Spleen (tissue), 13 donors: ENCODE measurements at regions of chr1 and their contacts with region 1.

Region 1: DNA sequence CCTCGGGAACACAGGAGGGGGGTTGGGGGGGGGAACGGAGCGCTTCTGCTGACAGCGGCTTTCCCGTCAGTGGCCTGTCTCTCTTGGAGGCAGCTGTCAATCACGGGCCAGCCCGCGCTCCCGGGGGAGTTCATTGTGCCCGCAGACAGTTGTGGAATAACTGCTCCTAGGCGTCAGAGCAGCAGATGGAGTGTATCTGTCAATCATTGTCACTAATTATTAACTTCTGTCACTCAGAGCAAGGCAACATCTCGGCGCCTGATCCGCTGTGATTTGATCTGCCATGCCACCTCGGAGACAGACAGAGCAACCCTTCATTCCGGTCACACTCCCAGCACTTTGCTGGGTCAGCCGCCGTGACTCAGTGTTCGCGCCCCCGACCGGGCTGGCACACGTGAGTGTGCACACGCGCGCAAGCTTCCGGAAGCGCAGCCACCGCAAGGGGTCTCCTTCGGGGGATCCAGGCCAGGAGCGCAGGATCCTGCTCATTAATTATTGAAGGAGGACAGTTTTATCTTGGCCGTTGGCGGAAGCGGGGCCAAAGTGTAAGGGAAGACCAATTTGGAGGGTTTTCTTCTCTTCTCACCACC is 75.8 kb downstream of the RRAGC start:
- DNase-seq: no peak
- H3K4me3 ChIP-seq: no peak overlapping the region
- H3K27ac ChIP-seq: no peak overlapping the region
- H3K4me1 ChIP-seq: peaks cover 0 to 8% (median 3%) of the 10 kb centered on the region in 6 donors
- H3K27me3 ChIP-seq: peaks cover 0 to 96% (median 17%) of the 10 kb centered on the region in 7 donors
- CTCF ChIP-seq: no peak
- POLR2A ChIP-seq: no peak

Region 2: GRCh38 chr1:38451541-38451993 is 332.2 kb before region 1 on chr1:
- intact Hi-C with region 1: no loop called
- DNase-seq: no peak
- H3K4me3 ChIP-seq: no peak overlapping the region
- H3K27ac ChIP-seq: no peak overlapping the region
- H3K4me1 ChIP-seq: peaks cover 9 to 22% (median 15%) of the 10 kb centered on the region in 6 donors
- H3K27me3 ChIP-seq: peaks cover 0 to 23% (median 0%) of the 10 kb centered on the region in 7 donors
- CTCF ChIP-seq: no peak
- POLR2A ChIP-seq: no peak

Region 3: GRCh38 chr1:38624336-38625039 is 159.2 kb before region 1 on chr1:
- intact Hi-C with region 1: loop called (anchors 10 kb)
- DNase-seq: no peak
- H3K4me3 ChIP-seq: no peak overlapping the region
- H3K27ac ChIP-seq: no peak overlapping the region
- H3K4me1 ChIP-seq: no peaks in the 10 kb centered on the region
- H3K27me3 ChIP-seq: peaks cover 0 to 13% (median 0%) of the 10 kb centered on the region in 7 donors
- CTCF ChIP-seq: no peak
- POLR2A ChIP-seq: no peak

Region 4: DNA sequence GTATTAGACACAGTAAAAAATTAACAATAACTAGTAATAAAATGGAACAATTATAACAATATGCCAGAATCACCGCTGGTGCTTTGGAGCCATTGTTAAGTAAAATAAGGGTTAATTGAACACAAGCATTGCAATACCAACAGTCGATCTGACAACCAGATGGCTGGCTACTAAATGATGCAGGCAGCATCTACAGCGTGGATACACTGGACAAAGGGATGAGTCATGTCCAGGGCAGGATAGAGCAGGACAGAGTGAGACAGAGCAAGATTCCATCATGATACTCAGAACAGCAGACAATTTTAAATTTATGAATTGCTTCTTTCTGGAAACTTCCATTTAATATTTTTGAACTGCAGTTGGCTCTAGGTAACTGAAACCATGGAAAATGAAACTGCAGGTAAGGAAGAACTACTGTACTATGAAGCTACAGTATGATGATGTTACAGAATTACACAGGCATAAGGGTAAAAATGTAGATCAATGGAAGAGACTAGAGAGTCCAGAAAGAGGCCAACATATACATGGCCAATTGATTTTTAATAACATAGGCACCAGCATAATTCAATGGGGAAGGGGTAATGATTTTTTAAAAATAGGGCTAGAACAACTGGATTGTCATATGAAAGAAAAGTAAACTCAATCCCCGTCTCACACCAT is 92.8 kb before region 1 on chr1:
- intact Hi-C with region 1: no loop called
- DNase-seq: no peak
- H3K4me3 ChIP-seq: no peak overlapping the region
- H3K27ac ChIP-seq: no peak overlapping the region
- H3K4me1 ChIP-seq: no peaks in the 10 kb centered on the region
- H3K27me3 ChIP-seq: peaks cover 0 to 48% (median 5%) of the 10 kb centered on the region in 7 donors
- CTCF ChIP-seq: no peak
- POLR2A ChIP-seq: no peak

Region 5: DNA sequence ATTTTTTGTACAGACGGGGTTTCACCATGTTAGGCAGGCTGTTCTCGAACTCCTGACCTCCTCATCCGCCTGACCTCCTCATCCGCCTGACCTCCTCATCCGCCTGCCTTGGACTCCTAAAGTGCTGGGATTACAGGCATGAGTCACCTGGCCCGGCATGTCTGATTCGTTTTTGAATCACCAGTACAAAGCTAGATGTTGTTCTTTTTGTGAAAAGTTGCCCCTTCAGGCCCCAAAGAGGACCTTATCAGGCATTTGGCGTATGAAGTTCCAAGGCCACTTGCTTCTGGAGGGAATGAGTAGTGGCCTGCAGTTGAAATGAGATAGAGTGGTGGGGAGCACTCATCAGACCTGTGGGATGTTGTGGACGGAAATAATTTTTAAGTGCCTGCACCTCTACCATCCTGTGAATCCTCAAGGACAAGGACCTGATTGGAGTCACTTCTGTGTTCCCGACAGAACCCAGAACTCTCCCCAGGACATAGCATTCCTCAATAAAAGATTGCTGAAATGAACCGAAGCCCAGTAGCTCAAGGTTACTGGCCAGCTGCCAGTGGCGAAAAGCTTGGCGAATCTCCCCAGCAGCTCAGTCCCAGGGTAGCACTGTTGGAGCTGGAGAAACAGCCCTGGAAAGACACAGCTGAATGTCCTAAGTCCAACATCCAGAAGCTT is 292.5 kb after region 1 on chr1:
- intact Hi-C with region 1: no loop called
- DNase-seq: peak; percentile 76
- H3K4me3 ChIP-seq: no peak overlapping the region
- H3K27ac ChIP-seq: peak overlapping the region in 7 of 8 donors; percentile 58 to 82 (median 72)
- H3K4me1 ChIP-seq: peaks cover 6 to 21% (median 14%) of the 10 kb centered on the region in 6 donors
- H3K27me3 ChIP-seq: peaks cover 0 to 18% (median 7%) of the 10 kb centered on the region in 7 donors
- CTCF ChIP-seq: no peak
- POLR2A ChIP-seq: no peak

Region 6: DNA sequence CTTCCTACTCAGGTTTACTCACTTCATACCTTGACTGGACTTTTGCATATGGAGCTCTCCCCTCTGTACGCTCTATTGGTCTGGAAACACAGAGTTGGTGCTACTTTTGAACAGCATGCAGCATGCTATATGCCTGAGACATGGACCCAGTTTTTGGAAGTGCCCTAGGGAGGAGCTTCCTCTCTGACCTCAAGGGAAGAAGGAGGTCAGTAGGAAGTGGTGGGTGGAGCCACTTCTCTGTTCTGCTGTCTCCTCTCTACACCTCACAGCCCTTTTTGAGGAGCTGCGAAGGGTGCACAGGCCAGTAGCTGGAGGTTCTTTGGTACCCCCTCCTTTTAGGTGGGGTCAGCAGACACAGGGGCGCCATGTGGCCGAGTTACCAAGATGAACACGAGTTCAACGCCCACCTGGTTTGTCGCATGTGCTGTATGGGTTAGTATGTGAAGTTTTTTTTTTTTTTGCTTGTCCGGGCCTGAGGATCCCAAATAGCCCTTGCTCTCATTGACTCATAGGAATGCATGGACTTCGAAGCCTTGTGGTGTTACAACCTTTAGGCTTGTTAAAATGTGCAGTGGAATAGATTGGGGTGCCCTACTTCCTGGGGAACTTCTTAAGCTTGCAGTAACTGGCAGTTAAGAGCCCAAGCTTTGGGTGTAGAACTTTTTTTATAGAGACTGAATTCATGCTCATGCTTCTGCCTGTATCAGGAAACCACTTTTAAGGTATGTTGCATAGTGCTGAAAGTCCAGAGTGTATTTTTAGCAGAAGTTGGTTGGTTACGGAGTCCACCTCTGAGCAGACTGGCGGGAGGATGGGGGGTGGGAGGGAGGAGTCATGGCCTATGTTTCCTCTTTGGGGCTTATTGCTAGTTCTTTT is 431.5 kb after region 1 on chr1:
- intact Hi-C with region 1: no loop called
- DNase-seq: peak; percentile 81
- H3K4me3 ChIP-seq: peak overlapping the region; percentile 20 to 67 (median 40)
- H3K27ac ChIP-seq: peak overlapping the region; percentile 74 to 89 (median 88)
- H3K4me1 ChIP-seq: peaks cover 34 to 83% (median 77%) of the 10 kb centered on the region in 6 donors
- H3K27me3 ChIP-seq: no peaks in the 10 kb centered on the region
- CTCF ChIP-seq: no peak
- POLR2A ChIP-seq: no peak